HEK293 (cell line): ENCODE measurements at regions of chr22 and their contacts with region 1.

Region 1: DNA sequence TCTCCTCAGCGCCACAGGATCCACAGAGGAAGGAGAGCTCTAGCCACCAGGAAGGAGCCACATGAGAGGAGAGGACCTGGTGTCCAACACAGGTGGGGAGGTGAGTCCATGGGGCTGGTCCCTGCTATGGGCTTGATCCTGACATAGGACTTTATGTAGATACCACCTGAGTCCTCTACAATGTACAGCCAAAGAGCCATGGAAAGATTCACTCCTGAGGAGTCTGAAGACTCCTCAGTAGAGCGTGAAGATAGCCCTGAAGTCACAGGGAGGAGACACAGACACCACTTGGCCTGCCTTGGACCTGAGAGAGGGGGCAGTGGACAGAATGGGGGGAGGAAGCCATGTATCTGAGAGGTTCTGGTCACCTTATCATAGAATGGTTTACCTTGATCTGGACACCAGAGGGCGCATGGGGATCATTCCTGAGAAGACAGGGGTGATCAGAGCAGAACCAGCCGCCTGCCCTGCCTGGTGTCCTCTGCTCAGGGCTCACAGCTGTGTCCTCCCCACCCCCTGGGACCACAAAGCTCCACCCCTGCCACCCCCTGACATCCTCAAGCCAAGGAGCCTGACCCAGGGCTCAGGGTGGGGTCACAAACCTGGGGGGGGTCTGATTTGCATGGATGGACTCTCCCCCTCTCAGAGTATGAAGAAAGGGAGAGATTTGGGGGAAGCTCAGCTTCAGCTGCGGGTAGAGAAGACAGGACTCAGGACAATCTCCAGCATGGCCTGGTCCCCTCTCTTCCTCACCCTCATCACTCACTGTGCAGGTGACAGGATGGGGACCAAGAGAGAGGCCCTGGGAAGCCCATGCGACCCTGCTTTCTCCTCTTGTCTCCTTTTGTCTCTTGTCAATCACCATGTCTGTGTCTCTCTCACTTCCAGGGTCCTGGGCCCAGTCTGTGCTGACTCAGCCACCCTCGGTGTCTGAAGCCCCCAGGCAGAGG is 77.0 kb downstream of the ZNF280B start:
- H3K4me3 ChIP-seq: no peak overlapping the region
- H3K27ac ChIP-seq: no peak overlapping the region
- H3K4me1 ChIP-seq: no peaks in the 10 kb centered on the region
- CTCF ChIP-seq: 0 out of 2 replicates have a peak, but pooled peaks have one; percentile 34

Region 2: DNA sequence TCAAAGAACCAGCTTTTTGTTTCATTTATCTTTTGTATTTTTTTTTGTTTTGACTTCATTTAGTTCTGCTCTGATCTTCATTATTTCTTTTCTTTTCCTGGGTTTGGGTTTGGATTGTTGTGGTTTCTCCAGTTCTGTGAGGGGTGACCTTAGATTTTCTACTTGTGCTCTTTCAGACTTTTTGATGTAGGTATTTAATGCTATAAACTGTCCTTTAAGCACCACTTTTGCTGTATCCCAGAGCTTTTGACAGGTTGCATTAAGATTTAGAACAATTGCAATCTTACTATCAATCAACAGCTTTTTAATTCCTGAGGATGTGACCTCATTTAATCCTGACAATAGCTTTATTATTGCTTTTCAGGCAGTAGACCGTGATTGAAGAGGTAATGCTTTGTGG is 17.3 kb before region 1 on chr22:
- CTCF ChIA-PET with region 1: interaction called, 13 read pairs
- POLR2A ChIA-PET with region 1: no interaction called
- H3K4me3 ChIP-seq: no peak overlapping the region
- H3K27ac ChIP-seq: no peak overlapping the region
- H3K4me1 ChIP-seq: no peaks in the 10 kb centered on the region
- CTCF ChIP-seq: no peak

Region 3: DNA sequence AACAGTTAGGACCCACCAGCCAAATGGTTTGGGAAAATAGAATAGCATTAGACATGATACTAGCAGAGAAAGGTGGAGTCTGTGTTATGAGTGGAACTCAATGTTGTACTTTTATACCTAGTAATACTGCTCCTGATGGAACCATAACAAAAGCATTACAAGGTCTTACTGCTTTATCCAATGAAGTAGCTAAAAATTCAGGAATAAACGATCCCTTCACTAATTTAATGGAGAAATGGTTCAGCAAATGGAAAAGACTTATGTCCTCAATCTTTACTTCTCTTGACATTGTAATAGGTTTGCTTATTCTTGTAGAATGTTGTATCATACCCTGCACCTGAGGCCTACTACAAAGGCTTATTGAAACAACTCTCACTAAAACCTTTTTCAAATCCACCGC is 26.8 kb after region 1 on chr22:
- CTCF ChIA-PET with region 1: interaction called, 30 read pairs
- POLR2A ChIA-PET with region 1: no interaction called
- H3K4me3 ChIP-seq: no peak overlapping the region
- H3K27ac ChIP-seq: no peak overlapping the region
- H3K4me1 ChIP-seq: no peaks in the 10 kb centered on the region
- CTCF ChIP-seq: no peak